ENCODE measurements at regions of chr2 and their contacts with region 1.

Region 1: GRCh38 chr2:215931256-215931903 is 82.0 kb downstream of the MREG start:
- DNase-seq: peak; percentile 93
- ATAC-seq: peak; percentile 83
- H3K4me3 ChIP-seq: peak overlapping the region; percentile 58
- H3K27ac ChIP-seq: peak overlapping the region; percentile 65
- H3K4me1 ChIP-seq: peaks cover 49% of the 10 kb centered on the region
- H3K27me3 ChIP-seq: no peaks in the 10 kb centered on the region
- CTCF ChIP-seq: peak; percentile 99

Region 2: DNA sequence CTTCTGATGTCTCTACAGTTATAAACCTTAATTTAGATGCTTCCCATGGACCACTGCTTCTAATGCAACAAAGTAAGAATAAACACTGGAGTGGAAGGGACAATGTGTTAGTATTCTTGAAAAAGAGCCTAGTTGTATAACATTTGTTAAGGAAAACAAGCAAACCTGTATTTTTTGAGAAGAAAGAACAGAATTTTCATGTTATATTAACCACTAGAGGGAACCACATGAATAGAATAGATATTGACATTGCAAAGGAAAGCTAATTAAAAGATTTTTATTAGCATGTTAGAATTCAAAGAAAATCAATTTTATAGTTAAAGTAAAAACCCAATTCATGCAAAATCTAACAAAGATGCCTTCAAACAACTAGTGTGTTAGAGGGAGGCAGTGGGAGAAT is 970.7 kb before region 1 on chr2:
- CTCF ChIA-PET with region 1: interaction called, 5 read pairs
- POLR2A ChIA-PET with region 1: no interaction called
- intact Hi-C with region 1: loop called (anchors 2 kb)
- DNase-seq: peak; percentile 42
- ATAC-seq: no peak
- H3K4me3 ChIP-seq: no peak overlapping the region
- H3K27ac ChIP-seq: no peak overlapping the region
- H3K4me1 ChIP-seq: no peaks in the 10 kb centered on the region
- H3K27me3 ChIP-seq: no peaks in the 10 kb centered on the region
- CTCF ChIP-seq: peak; percentile 70